ENCODE measurements at regions of chr5 and their contacts with region 1.

Region 1: DNA sequence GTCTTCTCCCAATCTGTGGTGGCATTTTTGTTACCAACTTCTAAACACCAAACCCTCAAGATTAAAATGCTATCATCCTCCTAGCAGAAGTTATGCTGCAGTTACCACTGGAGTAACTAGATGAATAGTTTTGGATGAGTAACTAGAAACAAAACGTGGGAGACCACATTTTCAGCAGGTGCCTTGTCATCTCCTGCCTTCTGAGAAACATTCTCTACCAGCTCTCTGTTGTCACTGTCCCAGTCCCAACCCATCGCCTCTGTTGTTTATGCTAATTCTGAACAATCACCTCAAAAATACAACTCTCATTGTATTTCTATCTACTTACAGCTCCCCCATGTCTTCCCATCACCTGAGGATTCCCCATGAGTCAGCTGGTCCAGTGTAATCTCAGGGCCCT is 652.5 kb upstream of the ADAMTS16 start:
- DNase-seq: no peak
- ATAC-seq: no peak
- H3K4me3 ChIP-seq: no peak overlapping the region
- H3K27ac ChIP-seq: no peak overlapping the region
- H3K4me1 ChIP-seq: no peaks in the 10 kb centered on the region
- H3K27me3 ChIP-seq: no peaks in the 10 kb centered on the region
- CTCF ChIP-seq: no peak
- EP300 ChIP-seq: no peak
- POLR2A ChIP-seq: no peak
- RAD21 ChIP-seq: no peak

Region 2: GRCh38 chr5:2983583-2984300 is 1503.8 kb before region 1 on chr5:
- CTCF ChIA-PET with region 1: no interaction called
- POLR2A ChIA-PET with region 1: no interaction called
- in situ Hi-C with region 1: no loop called
- intact Hi-C with region 1: loop called (anchors 5 kb)
- DNase-seq: no peak
- ATAC-seq: no peak
- H3K4me3 ChIP-seq: no peak overlapping the region
- H3K27ac ChIP-seq: no peak overlapping the region
- H3K4me1 ChIP-seq: no peaks in the 10 kb centered on the region
- H3K27me3 ChIP-seq: no peaks in the 10 kb centered on the region; a peak in 1 of 5 replicates
- CTCF ChIP-seq: no peak
- EP300 ChIP-seq: no peak
- POLR2A ChIP-seq: no peak
- RAD21 ChIP-seq: no peak

Region 3: GRCh38 chr5:4847766-4848165 is 360.2 kb after region 1 on chr5:
- CTCF ChIA-PET with region 1: no interaction called
- POLR2A ChIA-PET with region 1: no interaction called
- in situ Hi-C with region 1: no loop called
- intact Hi-C with region 1: no loop called
- DNase-seq: no peak
- ATAC-seq: no peak
- H3K4me3 ChIP-seq: no peak overlapping the region
- H3K27ac ChIP-seq: no peak overlapping the region
- H3K4me1 ChIP-seq: no peaks in the 10 kb centered on the region
- H3K27me3 ChIP-seq: no peaks in the 10 kb centered on the region
- CTCF ChIP-seq: no peak
- EP300 ChIP-seq: no peak
- POLR2A ChIP-seq: no peak
- RAD21 ChIP-seq: no peak